Activated T-helper 2 cell treated with anti-CD3 and anti-CD28 coated beads, Interferon-gamma antibody, Interleukin-2, Interleukin-4, amounts not matched to agents 10 μg/mL and 5 μg/mL and 100 μg/mL, durations not matched to agents 14 hours and 24 hours and 36 hours (primary cell): ENCODE measurements at regions of chr4 and their contacts with region 1.

Region 1: DNA sequence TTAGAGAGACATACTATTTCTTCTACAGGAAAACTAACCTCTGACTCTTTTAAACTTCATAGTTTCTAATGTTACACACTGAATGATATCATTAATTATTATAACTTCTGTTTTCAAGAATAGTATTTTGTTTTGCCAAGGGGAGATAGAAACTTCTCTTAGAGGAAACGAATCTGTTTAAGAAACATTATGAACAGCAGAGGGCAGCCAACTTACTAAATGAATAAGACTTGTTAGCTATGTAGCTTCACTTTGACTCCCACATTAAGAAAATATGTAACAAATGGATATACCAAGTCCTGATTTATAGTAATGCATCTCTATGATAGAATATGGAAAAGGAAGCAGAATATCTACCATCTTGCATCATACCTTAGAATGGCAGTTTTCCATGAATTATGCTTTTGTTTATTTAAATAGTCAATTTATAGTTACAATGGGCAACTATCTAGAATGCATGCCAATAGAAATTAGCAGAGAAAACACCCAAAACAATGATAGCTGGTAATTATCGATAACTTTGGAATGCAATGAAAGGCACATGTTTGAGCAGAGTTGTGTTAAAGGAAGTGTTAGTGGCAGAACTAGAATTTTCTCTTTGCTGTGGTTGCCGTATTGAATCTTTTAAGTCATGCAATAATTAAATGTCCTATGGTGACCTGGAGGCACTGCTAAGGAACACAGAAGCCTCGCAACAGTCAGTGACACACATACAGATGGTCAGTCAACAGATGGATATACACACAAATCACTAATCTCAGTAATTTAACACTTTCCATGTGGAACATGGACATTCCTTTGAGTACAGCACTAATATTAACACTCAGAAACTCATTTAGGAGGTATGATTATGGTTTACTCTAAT is 105.7 kb upstream of the PDLIM3 start:
- DNase-seq: no peak
- H3K4me3 Mint-ChIP-seq: no peak overlapping the region
- H3K27ac Mint-ChIP-seq: no peak overlapping the region
- H3K4me1 Mint-ChIP-seq: no peaks in the 10 kb centered on the region
- H3K27me3 Mint-ChIP-seq: peaks cover 32% of the 10 kb centered on the region

Region 2: DNA sequence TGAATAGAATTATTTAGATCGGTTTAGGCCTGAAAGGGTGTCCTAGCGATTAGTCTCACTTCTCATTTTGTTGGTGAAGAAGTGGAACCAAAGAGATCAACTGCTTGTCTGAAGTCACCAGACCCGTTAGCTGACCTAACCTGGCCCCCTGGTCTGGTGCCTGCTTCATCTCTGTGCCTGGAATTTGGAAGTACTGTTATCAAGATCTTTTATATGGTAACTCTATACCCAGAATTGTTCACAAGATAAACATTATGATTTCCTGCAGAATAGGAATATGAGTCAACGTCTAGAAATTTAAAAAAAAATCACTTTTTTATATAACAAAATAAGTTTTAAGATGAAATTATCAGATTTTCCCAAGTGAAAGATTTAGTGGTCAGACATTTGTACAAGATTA is 282.5 kb before region 1 on chr4:
- intact Hi-C with region 1: no loop called
- DNase-seq: no peak
- H3K4me3 Mint-ChIP-seq: no peak overlapping the region
- H3K27ac Mint-ChIP-seq: no peak overlapping the region
- H3K4me1 Mint-ChIP-seq: peaks cover 9% of the 10 kb centered on the region
- H3K27me3 Mint-ChIP-seq: no peaks in the 10 kb centered on the region

Region 3: DNA sequence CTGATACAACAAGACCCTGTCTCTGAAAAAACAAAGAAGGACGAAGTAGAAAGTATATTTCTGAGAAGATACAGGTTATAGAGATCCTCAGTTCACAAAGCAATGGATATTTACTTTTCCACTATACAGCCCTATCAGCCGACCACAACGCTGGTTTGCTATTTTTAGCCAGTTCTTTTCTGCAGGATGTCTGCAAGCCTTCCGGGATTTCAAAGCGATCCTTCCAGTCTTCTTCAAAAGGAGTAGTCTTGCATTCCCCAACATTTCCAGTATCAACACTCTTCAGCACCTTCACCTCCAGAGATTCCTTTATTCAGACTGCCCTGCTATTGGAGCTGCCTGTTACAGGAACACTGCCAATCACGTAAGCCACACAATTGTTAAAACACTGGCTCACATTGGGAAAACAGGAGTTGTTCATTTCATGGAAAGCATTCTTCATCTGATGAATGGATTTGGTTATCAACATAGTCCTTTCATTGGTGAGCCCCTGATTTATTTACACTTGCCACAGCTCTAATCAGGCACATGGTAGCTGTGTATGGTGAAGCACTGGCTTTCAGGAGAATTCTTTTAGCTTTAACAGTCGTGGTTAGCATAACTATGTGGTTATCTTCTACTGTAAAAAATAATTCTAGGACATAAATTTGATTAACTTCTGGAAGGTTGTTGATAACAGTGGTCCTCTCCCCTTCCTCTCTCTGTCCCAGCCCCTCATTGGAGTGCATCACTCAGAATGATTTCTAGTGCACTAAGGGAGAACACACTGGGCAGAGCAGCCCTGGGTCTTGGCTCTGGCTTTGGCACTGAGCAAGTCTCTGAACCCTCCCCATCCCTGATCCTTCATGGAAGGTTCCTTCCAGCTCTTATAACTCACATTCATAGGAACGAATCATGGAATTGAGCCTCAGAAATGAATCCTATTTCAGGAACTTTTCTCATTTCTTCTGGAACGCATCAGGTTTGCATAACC is 280.8 kb after region 1 on chr4:
- intact Hi-C with region 1: no loop called
- DNase-seq: no peak
- H3K4me3 Mint-ChIP-seq: no peak overlapping the region
- H3K27ac Mint-ChIP-seq: no peak overlapping the region
- H3K4me1 Mint-ChIP-seq: no peaks in the 10 kb centered on the region
- H3K27me3 Mint-ChIP-seq: no peaks in the 10 kb centered on the region

Region 4: DNA sequence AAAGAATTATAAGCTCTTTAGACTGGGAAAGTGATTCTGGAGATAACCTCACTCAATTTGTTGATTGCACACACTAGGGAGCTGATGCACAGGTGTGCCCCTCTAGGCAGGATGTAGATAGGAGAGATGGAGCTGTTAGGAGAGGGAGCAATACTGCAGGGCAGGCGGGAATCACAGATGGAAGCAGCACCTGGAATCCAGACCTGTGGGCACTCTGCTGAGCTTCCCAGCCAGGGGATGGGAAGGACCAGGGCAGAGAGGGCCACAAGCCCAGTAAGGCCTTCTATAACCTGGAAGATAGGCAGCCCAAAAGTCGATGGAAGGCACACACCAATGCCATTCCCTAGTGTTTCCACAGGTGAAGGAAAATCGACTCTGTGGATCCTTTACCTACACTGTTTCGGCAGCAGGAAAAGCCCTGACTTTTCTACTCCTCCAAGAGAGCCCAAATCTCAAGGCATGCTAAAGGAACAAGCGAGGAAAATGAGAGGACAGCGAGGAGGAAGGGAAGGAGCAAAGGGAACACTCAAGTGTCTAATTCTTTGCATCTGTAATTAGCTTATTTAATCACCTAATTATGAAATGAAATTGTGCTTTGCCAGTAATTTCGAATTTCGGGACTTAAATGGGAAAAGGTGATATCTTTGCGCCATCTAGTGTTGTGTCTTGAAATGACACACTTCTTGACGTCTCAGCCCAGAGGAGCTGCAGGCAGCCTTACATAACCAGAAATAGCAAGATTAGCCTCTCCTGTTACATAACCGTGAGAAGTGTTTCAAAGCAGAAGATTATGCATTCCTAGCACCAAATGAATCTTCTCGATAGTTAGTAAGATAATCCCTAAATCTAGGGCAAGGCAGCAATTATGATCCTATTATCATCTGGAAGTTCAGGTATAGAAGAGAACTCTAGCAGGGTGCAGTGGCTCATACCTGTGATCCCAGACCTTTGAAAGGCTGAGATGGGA is 396.9 kb after region 1 on chr4:
- intact Hi-C with region 1: loop called (anchors 2 kb)
- DNase-seq: no peak
- H3K4me3 Mint-ChIP-seq: no peak overlapping the region
- H3K27ac Mint-ChIP-seq: no peak overlapping the region
- H3K4me1 Mint-ChIP-seq: no peaks in the 10 kb centered on the region
- H3K27me3 Mint-ChIP-seq: peaks cover 6% of the 10 kb centered on the region

Region 5: GRCh38 chr4:186051096-186051495 is 410.1 kb after region 1 on chr4:
- intact Hi-C with region 1: no loop called
- DNase-seq: no peak
- H3K4me3 Mint-ChIP-seq: no peak overlapping the region
- H3K27ac Mint-ChIP-seq: no peak overlapping the region
- H3K4me1 Mint-ChIP-seq: no peaks in the 10 kb centered on the region
- H3K27me3 Mint-ChIP-seq: no peaks in the 10 kb centered on the region